Posterior cingulate gyrus (tissue), 11 donors: ENCODE measurements at regions of chr17 and their contacts with region 1.

Region 1: DNA sequence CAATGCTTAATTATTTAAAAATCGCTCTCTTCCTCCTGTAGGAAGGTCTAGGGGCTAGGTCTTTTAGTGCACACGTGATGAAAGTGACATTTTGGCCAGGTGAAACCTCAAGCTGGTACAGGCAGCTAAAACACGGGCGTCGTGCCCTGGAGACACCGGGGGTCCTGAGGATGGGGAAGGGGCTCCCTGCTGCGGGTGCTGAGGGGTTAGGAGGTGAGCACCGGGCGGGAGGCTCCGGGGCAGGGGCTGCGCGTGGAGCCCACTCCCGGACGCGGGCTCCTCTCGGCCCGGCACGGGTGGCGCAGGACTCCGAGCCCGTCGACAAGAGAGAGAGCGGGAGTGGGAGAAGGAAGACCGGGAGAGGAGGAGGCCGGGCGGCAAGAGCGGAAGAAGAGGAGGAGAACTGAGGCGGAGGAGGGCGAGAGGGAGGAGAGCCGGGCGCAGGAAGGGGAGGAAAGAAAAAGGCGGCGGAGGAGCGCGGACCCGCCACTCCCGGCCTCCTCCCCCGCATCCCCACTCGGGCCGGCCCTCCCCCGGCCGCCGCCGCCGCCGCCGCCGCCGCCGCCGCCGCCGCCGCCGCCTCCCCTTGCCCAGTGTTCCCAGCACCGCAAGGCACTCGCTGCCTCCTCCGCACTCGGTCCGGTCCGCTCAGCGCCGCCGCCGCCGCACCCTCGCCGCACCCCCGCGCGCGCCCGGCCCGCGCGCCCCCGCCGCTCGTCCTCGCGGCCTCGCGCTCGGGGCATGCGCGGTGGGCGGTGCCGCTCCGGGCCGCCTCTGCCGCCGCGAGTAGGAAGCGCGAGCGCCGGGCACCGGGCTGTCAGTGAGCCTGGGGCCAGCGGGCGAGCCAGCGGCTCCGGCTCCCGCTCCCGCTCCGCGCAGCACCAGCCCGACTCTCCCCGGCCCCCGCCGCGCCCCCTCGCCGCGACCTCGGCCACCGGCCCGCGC is at the start of gene PRKCA:
- DNase-seq: peak; percentile 51 to 96 (median 70)

Region 2: DNA sequence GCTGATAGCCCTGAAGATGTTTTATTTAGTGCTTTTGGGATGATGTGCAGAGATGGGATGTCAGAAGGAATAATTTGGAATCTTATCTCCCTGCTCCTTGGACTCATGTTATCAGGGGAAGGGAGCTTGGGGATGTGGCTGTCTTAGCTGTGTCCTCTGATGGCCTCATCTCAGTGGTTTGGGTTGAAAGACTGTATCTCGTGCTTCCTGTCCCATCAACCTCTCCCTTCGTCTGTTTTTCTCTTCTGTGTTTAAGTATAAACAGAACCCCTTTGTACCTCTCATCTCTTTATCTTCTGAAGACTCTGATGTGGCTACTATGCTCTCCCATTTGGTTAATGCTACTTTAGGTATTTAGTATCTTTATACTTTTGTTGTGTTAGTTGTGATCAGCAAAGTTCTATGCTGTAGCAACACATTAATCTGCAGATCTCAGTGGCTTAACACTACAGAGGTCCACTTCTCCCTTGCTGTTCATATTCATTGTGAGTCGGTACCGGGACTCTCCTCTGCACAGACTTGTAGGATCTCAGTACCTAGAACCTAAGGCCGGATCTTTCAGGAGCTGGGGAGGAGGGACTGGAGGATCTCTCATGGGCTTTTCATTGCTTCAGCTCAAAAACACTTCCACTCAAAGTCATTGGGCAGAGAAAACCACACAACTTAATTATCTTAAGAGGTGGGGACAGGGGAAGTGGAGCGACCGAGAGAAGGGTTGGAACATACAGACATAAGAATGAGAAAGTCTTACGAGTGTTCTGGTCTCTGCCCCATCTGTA is 29.2 kb after region 1 on chr17:
- intact Hi-C with region 1: no loop called
- DNase-seq: no peak

Region 3: GRCh38 chr17:66348584-66349165 is 46.6 kb after region 1 on chr17:
- intact Hi-C with region 1: no loop called
- DNase-seq: no peak

Region 4: DNA sequence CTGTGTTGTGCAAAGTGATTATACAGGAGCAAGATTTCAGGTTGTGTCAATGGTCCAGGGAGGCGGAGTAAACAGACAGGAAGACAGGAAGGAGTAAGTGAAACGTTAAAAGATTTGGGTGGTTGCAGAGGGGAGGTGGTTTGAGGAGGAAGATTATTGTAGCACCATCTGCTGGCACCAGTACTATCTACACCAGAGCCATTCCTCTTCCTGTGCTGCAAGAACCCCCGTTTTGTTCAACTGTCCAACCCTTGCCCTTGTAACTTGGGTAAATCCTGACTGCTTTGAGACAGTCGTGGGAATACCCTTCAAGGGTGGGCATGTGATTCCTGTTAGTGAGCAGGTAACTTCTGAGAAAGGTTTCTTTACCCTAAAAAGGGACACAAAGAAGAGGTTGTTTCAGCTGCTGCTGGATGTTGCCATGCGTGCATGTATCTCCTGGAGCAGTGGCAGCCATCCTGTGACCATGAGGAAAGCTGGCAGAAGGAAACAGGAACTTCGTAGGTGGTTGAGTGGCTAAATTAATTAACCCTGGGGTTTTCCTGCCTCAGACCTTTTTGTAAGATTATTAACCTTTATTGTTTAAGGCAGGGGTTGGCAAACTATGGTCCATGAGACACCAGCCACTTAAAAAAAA is 124.4 kb after region 1 on chr17:
- intact Hi-C with region 1: loop called (anchors 10 kb)
- DNase-seq: no peak

Region 5: DNA sequence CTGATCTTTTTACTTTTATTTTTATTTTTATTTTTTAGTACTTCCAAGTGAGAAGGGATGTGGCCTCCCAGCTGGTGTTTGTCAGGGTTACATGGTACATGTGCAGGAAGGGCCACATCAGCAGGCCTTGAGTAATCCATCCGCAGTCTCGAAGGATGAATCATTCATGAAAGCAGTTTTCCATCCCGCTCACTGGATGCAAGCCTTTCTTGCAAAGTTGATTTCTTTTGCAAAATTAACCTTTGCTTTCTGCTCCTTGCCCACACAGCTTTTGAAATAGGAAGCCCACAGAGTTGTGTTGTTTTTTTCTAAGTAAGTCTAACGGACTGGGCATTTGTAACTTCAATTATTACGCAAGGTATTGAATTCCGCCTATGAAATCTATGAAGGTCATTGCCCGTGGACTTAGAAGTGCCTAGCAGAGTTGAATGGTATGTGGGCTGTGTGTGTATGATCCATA is 157.8 kb after region 1 on chr17:
- intact Hi-C with region 1: no loop called
- DNase-seq: peak in 1 of 10 donors; percentile 74

Region 6: DNA sequence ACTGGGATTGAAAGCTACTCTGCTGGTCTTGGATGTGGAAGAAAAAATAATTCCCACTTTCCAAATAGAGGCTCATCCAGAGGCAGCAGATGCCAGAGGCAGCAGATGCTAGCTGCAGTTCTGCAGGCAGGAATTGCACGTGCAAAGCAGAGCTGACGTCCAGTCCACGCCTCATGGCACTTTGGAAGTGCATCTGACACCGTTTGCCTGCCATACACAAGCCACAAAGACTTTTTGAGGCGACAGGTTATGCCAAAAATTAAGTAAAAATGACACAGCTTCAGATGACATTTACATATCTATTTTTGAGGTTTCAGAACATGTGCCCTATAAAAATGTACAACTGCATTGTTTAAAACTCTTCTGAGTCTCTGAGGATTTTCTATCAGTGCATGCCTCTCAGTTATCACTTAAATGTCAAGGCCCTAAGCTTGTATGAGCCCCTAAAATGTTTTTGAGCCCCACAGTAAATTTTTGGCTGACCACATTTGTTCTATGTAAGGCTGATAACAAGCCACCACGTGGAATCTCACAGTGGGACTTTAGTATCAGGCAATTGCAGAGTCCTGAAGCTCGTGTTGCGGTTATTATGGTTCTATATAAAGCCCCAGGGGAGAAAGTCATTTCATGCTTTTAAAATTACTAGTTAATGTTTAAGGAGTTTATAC is 239.5 kb after region 1 on chr17:
- intact Hi-C with region 1: loop called (anchors 2 kb)
- DNase-seq: peak in 4 of 10 donors; percentile 33 to 89 (median 64)

Region 7: GRCh38 chr17:66567234-66568170 is 265.4 kb after region 1 on chr17:
- intact Hi-C with region 1: loop called (anchors 10 kb)
- DNase-seq: peak; percentile 51 to 96 (median 76)